ENCODE measurements at regions of chr2 and their contacts with region 1.

Region 1: DNA sequence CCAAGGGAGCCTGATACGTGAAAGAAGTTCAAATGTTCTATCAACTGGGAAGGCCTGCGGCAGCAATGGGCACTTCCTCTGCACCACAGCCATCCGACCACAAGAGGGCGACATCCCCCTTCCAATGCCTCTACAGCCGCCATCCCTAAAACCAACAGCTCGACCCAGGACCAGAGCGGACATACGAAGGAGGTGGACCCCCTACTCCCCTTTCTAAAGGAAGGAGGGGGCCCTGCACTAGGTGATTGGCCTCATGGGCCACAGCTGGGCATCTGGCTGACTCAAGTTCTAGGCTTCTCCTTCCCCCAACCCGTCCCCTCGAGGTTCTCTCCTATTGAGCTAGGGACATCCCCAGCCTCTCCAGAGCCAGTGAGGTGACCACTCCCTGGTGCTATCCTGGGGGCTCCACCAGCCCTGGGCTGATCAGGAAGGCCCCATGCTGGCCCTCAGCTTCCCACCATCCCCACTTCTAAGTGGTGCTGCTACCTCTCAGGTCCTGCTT is 217.2 kb downstream of the TNS1 start:
- DNase-seq: peak; percentile 73
- H3K4me3 ChIP-seq: no peak overlapping the region
- H3K27ac ChIP-seq: no peak overlapping the region
- H3K4me1 ChIP-seq: no peaks in the 10 kb centered on the region
- H3K27me3 ChIP-seq: peaks cover 1 to 4% of the 10 kb centered on the region in 2 experiments
- CTCF ChIP-seq: peak; percentile 90 to 95
- POLR2A ChIP-seq: no peak

Region 2: DNA sequence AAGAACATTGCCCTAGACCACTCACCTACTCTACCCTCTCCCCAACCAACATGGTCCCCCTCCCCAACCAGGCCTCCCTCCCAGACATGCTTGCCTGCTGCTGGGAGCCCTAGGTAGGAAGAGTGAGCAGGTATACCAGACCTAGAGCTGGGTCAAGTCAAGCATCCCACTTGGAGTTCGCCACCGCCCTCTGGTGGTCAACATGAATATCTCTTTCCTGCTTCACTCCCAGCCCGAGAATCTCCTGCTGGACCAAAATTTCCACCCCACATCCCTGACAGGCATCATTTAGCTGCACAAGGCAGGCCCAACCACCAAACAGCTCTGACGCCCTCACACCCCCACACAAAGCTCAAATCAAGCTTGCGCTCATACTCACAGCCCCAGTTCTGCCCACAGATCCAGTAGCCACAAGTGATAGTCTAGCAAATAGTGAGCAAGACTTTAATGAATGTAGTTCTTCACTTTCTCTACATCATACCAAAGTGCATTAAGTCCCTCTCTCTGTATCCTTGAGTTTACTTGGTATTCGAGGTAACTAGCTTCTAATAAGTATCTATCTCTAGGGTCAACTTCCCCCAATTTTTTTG is 101.2 kb after region 1 on chr2:
- CTCF ChIA-PET with region 1: interaction called, 269 read pairs
- POLR2A ChIA-PET with region 1: no interaction called
- dilution Hi-C with region 1: no loop called
- intact Hi-C with region 1: loop called (anchors 1 kb)
- DNase-seq: peak; percentile 71
- H3K4me3 ChIP-seq: no peak overlapping the region
- H3K27ac ChIP-seq: no peak overlapping the region
- H3K4me1 ChIP-seq: peaks cover 17% of the 10 kb centered on the region
- H3K27me3 ChIP-seq: no peaks in the 10 kb centered on the region
- CTCF ChIP-seq: peak; percentile 78 to 80
- POLR2A ChIP-seq: no peak

Region 3: DNA sequence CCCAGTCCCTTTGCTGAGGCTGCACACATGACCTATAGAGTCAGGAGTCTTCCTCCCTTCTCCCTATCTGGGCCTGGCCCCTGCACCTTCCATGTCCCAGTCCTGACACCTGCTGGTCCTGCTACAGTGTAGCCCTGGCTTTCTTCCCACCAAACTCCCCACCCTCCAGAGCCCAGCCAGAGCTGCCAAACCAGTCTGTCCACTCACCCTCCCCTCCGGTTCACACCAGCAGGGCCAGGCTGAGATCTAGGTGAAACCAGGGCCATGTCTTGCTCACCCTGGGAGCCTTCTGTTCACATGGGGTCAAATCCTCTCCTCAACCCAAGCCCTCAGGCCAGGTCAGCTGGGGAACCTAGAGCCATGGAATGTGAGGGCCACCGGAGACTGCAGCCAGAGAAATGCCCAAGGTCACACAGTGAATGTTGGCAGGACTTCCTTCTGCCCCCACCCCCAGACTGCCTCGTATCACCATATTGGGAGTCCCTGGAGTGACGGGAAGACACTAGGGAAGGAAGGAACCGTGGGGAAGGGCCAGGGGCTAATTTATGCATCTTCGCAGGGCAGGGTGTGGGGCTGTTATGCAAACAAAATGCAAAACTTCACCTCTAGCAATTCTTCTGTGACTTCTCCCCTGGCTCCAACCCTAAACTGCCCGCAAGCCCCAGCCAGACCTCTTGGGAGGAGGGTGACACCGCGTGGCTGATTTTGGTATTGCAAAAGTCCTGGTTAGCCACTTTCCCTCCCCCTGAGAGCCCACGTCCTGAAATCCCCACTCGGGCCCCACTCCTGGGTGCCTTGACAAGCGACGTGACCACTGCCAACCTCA is 202.6 kb after region 1 on chr2:
- CTCF ChIA-PET with region 1: interaction called, 204 read pairs
- POLR2A ChIA-PET with region 1: no interaction called
- dilution Hi-C with region 1: no loop called
- intact Hi-C with region 1: loop called (anchors 1 kb)
- DNase-seq: peak; percentile 69
- H3K4me3 ChIP-seq: no peak overlapping the region
- H3K27ac ChIP-seq: no peak overlapping the region
- H3K4me1 ChIP-seq: peaks cover 21% of the 10 kb centered on the region
- H3K27me3 ChIP-seq: no peaks in the 10 kb centered on the region
- CTCF ChIP-seq: peak; percentile 85 to 89
- POLR2A ChIP-seq: no peak

Region 4: DNA sequence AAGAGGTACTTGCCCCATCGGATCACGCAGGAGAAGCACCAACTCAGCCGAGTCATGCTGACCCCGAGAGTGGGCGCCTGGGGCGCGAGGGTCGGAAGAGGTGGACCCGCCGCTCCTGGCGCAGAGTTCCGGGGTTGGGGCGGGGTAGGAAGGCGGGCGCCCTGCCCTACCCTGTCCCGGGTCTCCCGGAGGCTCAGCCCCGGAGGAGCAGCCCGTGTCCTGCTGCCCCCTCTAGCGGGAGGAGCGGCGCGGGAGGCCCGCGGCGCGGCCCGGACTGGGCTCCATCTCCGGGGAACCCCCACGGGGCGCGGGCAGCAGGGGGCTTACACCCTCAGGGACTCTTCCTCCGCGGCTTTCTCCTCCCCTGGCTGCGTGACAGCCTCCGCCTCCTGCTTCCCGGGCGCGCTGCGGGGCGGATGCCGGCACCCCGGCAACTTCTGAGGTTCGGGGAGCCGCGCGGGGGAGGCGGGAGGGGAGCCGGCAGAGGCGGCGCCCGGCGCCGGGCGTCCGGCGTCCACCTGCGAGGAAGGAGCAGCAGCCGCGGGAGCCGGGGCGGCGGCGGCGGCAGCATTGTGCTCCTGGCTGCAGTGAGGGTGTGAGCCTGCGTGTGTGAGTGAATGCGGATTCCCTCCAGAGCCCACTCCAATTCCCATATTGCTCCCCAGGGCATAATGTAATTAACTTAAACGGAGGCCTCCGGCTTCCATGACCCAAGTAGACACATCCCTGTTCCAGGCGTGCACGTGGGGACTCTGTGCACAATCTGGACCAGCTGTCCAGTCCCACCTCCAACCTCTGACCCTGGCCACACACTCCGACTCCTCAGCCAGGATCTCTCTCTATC is 224.8 kb after region 1 on chr2:
- CTCF ChIA-PET with region 1: interaction called, 22 read pairs
- POLR2A ChIA-PET with region 1: no interaction called
- dilution Hi-C with region 1: no loop called
- intact Hi-C with region 1: no loop called
- DNase-seq: peak; percentile 26
- H3K4me3 ChIP-seq: peak overlapping the region; percentile 30 to 37 (median 36)
- H3K27ac ChIP-seq: no peak overlapping the region
- H3K4me1 ChIP-seq: peaks cover 21% of the 10 kb centered on the region
- H3K27me3 ChIP-seq: peaks cover 0 to 6% of the 10 kb centered on the region in 2 experiments
- CTCF ChIP-seq: peak; percentile 47 to 78
- POLR2A ChIP-seq: no peak

Region 5: DNA sequence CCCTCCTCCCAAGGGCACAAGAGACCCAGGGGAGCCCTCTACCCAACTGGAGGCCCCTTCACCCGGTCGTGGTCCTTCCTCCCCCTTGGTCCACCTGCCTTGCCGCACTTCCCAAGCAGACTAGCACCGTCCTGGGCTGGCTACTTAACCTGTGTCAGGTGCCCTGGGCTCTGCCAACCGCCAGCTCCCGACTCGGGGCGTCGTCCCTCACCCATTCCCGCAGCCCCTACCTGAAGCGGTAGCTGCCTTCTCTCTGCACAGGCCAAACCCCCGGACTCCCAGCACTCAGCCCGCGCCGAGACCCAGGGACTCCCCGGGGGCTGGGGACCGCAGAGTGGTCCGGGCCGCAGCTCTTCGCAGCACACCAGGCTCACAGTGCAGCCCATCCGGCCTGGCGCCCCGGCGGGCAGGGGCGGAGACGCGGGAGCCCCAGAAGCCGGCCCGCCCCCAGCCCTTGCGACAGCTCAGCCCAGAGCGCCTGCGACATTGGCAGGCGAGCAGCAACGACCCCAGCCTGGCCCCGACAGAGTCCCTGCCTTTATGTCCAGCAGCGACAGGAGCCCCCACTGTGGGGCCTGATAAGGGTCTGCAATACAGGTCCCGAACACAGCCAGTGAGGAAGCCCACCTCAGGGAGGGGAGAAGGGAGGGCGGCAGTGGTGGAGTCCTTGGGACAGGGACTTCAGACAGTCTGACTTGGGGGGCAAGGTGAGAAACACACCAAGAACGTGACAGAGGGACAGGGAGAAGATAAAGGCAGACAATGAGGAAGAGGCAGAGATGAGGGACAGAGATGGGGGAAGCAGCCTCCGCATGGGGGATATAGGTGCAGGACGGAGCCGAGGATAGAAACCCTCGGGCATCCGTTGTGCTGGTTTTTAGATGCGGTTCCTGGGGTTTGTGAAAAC is 248.2 kb after region 1 on chr2:
- CTCF ChIA-PET with region 1: interaction called, 341 read pairs
- POLR2A ChIA-PET with region 1: no interaction called
- dilution Hi-C with region 1: no loop called
- intact Hi-C with region 1: loop called (anchors 1 kb)
- DNase-seq: no peak
- H3K4me3 ChIP-seq: no peak overlapping the region
- H3K27ac ChIP-seq: no peak overlapping the region
- H3K4me1 ChIP-seq: no peaks in the 10 kb centered on the region
- H3K27me3 ChIP-seq: peaks cover 26 to 27% of the 10 kb centered on the region in 2 experiments
- CTCF ChIP-seq: no peak
- POLR2A ChIP-seq: no peak

Region 6: DNA sequence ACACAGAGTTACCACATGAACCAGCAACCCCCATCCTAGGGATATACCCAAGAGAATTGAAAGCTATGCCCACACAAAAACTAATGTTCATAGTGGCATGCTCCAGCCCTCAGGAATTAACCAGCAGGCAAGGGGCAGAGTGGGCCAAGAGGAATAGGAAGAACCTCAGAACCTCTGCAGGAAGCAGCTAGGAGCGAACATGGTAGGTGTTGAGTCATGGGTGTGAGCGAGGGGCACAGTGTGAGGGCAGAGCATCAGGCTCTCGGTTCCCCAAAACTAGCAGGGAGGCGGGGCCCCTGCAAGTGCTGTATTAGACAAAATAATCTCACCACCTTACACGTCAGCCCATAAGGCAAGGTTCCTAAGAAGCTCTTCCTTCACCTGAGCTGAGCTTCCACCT is 277.9 kb after region 1 on chr2:
- CTCF ChIA-PET with region 1: interaction called, 317 read pairs
- POLR2A ChIA-PET with region 1: no interaction called
- dilution Hi-C with region 1: no loop called
- intact Hi-C with region 1: loop called (anchors 1 kb)
- DNase-seq: no peak
- H3K4me3 ChIP-seq: no peak overlapping the region
- H3K27ac ChIP-seq: no peak overlapping the region
- H3K4me1 ChIP-seq: no peaks in the 10 kb centered on the region
- H3K27me3 ChIP-seq: peaks cover 7 to 12% of the 10 kb centered on the region in 2 experiments
- CTCF ChIP-seq: no peak
- POLR2A ChIP-seq: no peak

Measured in endothelial cell of umbilical vein (primary cell).